Breast epithelium (tissue), 4 donors: ENCODE measurements at regions of chr19 and their contacts with region 1.

Region 1: DNA sequence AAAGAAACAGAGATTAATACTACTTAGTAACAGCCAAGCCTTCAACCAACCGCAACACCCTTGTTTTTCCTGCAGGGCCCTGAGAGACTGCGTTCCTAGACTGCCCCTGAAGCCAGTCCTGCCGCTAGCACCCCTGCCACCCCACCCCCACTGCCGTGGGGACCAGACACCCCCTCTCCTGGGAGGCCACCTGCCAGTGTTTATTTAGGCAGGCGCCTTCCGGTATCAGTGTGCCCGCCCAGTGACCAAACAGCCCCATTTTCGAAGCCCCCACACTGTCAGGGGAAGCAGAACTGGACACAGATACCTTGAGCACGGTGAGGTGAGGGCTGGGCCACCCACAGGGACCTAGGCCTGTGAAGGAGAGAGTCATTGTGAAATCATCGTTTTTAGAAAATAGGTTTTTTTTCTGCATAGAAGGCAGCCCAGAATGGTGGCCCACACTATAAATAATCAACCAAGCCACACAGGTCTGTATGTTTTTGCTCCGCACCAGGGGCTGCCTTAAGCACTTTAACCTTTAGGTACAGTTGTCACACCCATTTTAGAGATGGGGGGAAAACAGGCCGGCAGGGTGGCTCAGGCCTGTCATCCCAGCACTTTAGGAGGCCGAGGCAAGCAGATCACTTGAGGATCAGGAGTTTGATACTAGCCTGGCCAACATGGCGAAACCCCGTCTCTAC is 3.5 kb upstream of the TLE5 start:
- DNase-seq: no peak
- H3K4me3 ChIP-seq: no peak overlapping the region
- H3K27ac ChIP-seq: peak overlapping the region; percentile 10 to 74
- H3K4me1 ChIP-seq: peaks cover 0 to 3% of the 10 kb centered on the region in 2 donors
- H3K27me3 ChIP-seq: no peaks in the 10 kb centered on the region
- CTCF ChIP-seq: no peak
- POLR2A ChIP-seq: no peak

Region 2: GRCh38 chr19:3075895-3076431 is 10.1 kb after region 1 on chr19:
- intact Hi-C with region 1: loop called (anchors 1 kb)
- DNase-seq: peak in 1 of 2 donors; percentile 68
- H3K4me3 ChIP-seq: peak overlapping the region in 2 of 3 donors; percentile 28 to 35
- H3K27ac ChIP-seq: no peak overlapping the region
- H3K4me1 ChIP-seq: peaks cover 0 to 4% of the 10 kb centered on the region in 2 donors
- H3K27me3 ChIP-seq: no peaks in the 10 kb centered on the region
- CTCF ChIP-seq: peak; percentile 89 to 96 (median 95)
- POLR2A ChIP-seq: no peak

Region 3: DNA sequence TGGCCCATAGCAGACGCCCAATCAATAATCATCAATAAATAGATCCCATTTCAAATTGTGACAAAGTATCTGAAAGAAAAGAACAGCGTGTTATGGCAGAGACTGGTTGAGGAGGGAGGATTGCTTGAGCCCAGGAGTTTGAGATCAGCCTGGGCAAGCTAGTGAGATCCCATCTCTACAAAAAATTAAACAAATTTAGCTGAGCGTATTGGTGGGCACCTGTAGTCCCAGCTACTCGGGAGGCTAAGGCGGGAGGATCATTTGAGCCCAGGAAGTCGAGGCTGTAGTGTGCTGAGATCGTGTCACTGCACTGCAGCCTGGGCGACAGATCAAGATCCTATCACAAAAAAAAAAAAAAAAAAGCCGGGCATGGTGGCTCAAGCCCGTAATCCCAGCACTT is 22.0 kb after region 1 on chr19:
- intact Hi-C with region 1: no loop called
- DNase-seq: no peak
- H3K4me3 ChIP-seq: no peak overlapping the region
- H3K27ac ChIP-seq: no peak overlapping the region
- H3K4me1 ChIP-seq: no peaks in the 10 kb centered on the region
- H3K27me3 ChIP-seq: no peaks in the 10 kb centered on the region
- CTCF ChIP-seq: no peak
- POLR2A ChIP-seq: no peak

Region 4: GRCh38 chr19:3110071-3110815 is 44.4 kb after region 1 on chr19:
- intact Hi-C with region 1: loop called (anchors 5 kb)
- DNase-seq: no peak
- H3K4me3 ChIP-seq: no peak overlapping the region
- H3K27ac ChIP-seq: no peak overlapping the region
- H3K4me1 ChIP-seq: no peaks in the 10 kb centered on the region
- H3K27me3 ChIP-seq: no peaks in the 10 kb centered on the region
- CTCF ChIP-seq: no peak
- POLR2A ChIP-seq: no peak